ENCODE measurements at regions of chr1 and their contacts with region 1.

Region 1: DNA sequence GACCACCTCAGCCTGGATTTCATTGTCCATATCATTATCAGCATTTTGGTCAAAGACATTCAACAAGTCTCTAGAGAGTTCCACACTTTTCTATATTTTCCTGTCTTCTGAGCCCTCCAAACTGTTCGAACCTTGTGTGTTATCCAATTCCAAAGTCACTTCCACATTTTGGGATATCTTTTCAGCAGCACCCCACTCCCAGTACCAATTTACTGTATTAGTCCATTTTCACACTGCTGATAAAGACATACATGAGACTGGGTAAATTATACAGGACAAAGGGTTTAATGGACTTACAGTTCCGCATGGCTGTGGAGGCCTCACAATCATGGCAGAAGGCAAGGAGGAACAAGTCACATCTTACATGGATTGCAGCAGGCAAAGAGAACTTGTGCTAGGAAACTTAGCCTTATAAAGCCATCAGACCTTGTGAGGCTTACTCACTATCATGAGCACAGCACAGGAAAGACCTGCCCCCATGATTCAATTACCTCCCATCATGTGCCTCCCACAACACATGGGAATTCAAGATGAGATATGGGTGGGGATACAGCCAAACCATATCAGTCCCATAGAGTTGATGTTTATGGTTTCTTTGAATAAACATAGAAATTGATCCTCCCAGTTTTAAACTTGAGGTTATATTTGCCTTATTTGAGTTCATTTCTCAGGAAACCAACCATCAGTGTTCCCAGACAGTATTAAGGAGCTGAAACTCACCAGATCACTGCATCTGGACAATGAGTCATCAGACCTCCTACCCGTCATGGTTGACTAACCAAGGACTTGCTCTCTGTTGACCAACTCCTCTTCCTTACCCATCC is 322.7 kb upstream of the DUSP10 start:
- DNase-seq: no peak
- ATAC-seq: no peak
- H3K4me3 ChIP-seq: no peak overlapping the region
- H3K27ac ChIP-seq: no peak overlapping the region
- H3K4me1 ChIP-seq: peaks cover 39% of the 10 kb centered on the region
- H3K27me3 ChIP-seq: no peaks in the 10 kb centered on the region; a peak in 1 of 5 replicates
- CTCF ChIP-seq: no peak
- EP300 ChIP-seq: no peak
- POLR2A ChIP-seq: no peak
- RAD21 ChIP-seq: no peak

Region 2: GRCh38 chr1:222084996-222085395 is 20.4 kb after region 1 on chr1:
- CTCF ChIA-PET with region 1: no interaction called
- POLR2A ChIA-PET with region 1: no interaction called
- in situ Hi-C with region 1: no loop called
- intact Hi-C with region 1: no loop called
- DNase-seq: no peak
- ATAC-seq: no peak
- H3K4me3 ChIP-seq: no peak overlapping the region
- H3K27ac ChIP-seq: no peak overlapping the region
- H3K4me1 ChIP-seq: no peaks in the 10 kb centered on the region
- H3K27me3 ChIP-seq: no peaks in the 10 kb centered on the region
- CTCF ChIP-seq: no peak
- EP300 ChIP-seq: no peak
- POLR2A ChIP-seq: no peak
- RAD21 ChIP-seq: no peak

Region 3: GRCh38 chr1:222233444-222234158 is 169.0 kb after region 1 on chr1:
- CTCF ChIA-PET with region 1: no interaction called
- POLR2A ChIA-PET with region 1: no interaction called
- in situ Hi-C with region 1: no loop called
- intact Hi-C with region 1: no loop called
- DNase-seq: no peak
- ATAC-seq: no peak
- H3K4me3 ChIP-seq: no peak overlapping the region
- H3K27ac ChIP-seq: no peak overlapping the region
- H3K4me1 ChIP-seq: no peaks in the 10 kb centered on the region
- H3K27me3 ChIP-seq: no peaks in the 10 kb centered on the region; a peak in 1 of 5 replicates
- CTCF ChIP-seq: no peak
- EP300 ChIP-seq: no peak
- POLR2A ChIP-seq: no peak
- RAD21 ChIP-seq: no peak

Region 4: DNA sequence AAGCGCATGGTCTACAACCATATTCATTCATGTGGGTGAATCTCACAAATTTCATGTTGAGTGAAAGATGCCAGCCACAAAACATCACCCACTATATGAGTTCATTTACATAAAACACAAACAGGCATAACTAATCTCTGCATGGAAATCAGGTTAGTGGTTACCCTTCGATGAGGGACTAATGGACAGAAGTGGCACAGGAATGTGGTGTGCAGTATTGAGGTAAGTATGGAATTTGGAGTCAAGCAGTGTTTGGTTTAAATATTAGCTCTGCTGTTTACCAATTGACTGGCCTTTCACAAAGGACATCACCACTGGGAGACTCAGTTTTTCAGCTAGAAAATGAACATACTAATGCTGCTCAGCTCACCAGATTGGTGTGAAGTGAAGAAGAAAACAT is 1352.8 kb after region 1 on chr1:
- CTCF ChIA-PET with region 1: no interaction called
- POLR2A ChIA-PET with region 1: no interaction called
- in situ Hi-C with region 1: no loop called
- intact Hi-C with region 1: loop called (anchors 5 kb)
- DNase-seq: peak; percentile 49
- ATAC-seq: peak; percentile 99
- H3K4me3 ChIP-seq: no peak overlapping the region
- H3K27ac ChIP-seq: no peak overlapping the region
- H3K4me1 ChIP-seq: peaks cover 32% of the 10 kb centered on the region
- H3K27me3 ChIP-seq: no peaks in the 10 kb centered on the region
- CTCF ChIP-seq: no peak
- EP300 ChIP-seq: no peak
- POLR2A ChIP-seq: no peak
- RAD21 ChIP-seq: no peak